ENCODE measurements at regions of chr16 and their contacts with region 1.

Region 1: DNA sequence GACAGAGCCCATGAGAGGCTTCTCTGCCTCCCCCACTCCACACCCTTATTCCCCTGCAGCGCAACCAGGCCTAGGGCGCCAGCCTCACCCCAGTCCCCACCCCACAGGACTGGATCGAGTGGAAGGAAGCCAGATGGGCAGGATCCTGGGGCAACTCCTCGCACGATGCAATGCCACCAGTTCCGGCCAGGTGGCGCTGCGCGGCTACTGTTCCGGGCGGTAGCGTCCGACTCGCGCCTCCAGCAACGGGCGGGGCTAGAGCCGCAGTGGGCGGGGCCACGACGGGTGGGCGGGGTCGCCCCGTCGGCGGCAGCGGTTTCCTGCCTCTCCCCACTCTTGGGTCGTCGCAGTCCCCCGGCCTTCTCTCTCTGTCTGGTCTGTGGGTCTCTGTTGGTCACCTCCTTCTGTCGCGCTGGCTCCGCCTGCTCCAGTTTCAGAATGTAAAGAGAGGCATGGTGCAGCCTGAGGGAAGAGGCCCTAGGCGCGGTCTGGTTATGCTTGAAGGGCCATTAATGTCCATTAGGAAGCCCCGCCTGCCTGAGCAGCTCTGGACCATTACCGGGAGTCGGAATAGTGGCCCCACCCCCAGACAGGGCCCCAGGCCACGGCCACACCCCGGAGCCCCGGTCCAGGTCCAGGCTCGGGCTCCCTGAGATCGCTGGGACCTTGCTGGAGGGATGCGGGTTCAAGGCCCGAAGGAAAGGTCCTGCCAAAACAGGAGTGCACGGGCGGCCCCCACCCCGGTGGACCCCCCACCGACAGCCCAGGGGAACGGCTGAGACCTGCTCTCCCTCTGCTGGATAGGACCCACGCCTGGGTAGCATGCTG is 3.4 kb upstream of the NHERF2 start:
- DNase-seq: peak; percentile 77
- ATAC-seq: peak; percentile 64
- H3K4me3 ChIP-seq: peak overlapping the region; percentile 36 to 50
- H3K27ac ChIP-seq: peak overlapping the region; percentile 88
- H3K4me1 ChIP-seq: peaks cover 42 to 67% of the 10 kb centered on the region in 2 experiments
- H3K27me3 ChIP-seq: no peaks in the 10 kb centered on the region
- CTCF ChIP-seq: peak in 2 of 3 experiments; percentile 91 to 92; a peak in 4 of 6 replicates
- POLR2A ChIP-seq: peak; percentile 35
- RAD21 ChIP-seq: no peak

Region 2: DNA sequence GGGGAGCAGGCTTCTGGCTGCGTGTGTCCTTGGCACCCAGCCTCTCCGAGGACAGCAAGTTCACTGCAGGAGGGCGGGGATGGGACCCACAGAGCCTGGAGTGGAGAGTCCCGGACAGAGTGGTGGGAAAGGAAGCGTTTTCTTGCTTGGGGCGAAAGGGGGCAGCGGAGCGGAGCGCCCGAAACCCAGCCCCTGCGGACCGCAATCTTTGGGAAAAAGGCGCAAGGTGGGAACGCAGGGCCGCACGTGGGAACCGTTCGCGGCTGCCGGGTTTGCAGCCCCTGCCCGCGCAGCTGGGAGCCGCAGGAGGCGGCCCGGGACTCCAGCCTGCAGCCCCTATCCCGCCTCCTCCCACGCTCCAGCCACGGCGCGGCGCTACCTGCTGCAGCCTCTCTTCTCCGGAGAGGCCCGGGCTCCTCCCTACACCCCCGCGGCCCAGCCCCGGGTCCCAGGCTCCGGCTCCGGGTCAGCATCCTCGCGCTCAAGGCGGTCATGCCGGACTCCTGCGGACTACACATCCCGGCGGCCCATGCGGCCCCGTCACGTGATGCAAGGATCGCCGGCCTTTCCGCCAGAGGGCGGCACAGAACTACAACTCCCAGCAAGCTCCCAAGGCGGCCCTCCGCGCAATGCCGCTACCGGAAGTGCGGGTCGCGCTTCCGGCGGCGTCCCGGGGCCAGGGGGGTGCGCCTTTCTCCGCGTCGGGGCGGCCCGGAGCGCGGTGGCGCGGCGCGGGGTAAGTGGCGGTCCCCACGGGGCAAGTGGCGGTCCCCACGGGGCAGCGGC is 24.2 kb after region 1 on chr16 and contains the starts of genes NTHL1 and TSC2:
- CTCF ChIA-PET with region 1: interaction called, 12 read pairs
- POLR2A ChIA-PET with region 1: no interaction called
- RAD21 ChIA-PET with region 1: no interaction called
- intact Hi-C with region 1: no loop called
- DNase-seq: peak; percentile 91
- ATAC-seq: peak; percentile 96
- H3K4me3 ChIP-seq: peak within 1 kb of the TSS; percentile 64 to 88
- H3K27ac ChIP-seq: peak within 1 kb of the TSS; percentile 71
- H3K4me1 ChIP-seq: peaks cover 6 to 34% of the 10 kb centered on the region in 2 experiments; a peak in 3 of 4 replicates
- H3K27me3 ChIP-seq: no peaks in the 10 kb centered on the region
- CTCF ChIP-seq: peak in 2 of 3 experiments; percentile 7 to 21; a peak in 1 of 6 replicates
- POLR2A ChIP-seq: peak; percentile 67
- RAD21 ChIP-seq: no peak
- total RNA-seq, gene NTHL1: 40.1 TPM
- total RNA-seq, gene TSC2: 74.1 TPM

Region 3: DNA sequence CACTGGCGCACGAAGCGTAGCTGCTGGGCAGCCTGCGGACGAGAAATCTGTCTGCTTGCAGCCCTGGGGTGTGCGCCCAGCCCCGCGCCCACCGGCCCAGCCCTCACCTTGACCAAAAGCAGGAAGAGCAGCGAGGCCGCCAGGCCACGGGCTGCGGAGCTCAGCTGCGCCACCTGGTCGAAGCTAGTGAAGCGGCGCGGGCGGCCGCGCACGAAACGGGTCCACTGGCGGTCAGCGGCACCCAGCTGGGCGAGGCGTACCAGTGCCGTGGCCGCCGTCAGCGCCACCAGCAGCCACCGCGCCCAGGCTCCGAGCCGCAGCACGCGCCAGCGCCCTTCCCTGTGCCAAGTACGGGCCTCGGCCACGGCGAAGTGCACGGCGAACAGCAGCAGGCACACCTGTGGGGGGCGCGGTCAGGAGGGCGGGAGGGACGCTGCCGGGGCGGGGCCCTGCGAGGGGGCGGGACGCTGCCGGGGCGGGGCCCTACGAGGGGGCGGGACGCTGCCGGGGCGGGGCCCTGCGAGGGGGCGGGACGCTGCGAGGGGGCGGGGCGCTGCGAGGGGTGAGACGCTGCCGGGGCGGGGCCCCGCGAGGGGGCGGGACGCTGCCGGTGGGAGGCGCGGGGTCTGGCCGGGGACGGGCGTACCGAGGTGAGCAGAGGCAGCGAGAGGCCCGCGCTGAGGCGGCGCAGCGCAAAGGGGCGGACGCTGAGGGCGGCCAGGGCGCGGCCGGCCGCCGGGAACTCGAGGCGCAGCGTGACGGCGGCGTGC is 67.7 kb after region 1 on chr16:
- CTCF ChIA-PET with region 1: interaction called, 13 read pairs
- POLR2A ChIA-PET with region 1: interaction called, 3 read pairs
- RAD21 ChIA-PET with region 1: no interaction called
- intact Hi-C with region 1: loop called (anchors 2 kb)
- DNase-seq: peak; percentile 66
- ATAC-seq: peak; percentile 82
- H3K4me3 ChIP-seq: peak overlapping the region; percentile 49 to 62
- H3K27ac ChIP-seq: peak overlapping the region; percentile 84
- H3K4me1 ChIP-seq: peaks cover 9 to 29% of the 10 kb centered on the region in 2 experiments
- H3K27me3 ChIP-seq: no peaks in the 10 kb centered on the region
- CTCF ChIP-seq: peak; percentile 54 to 63 (median 55)
- POLR2A ChIP-seq: no peak
- RAD21 ChIP-seq: peak; percentile 62

Region 4: DNA sequence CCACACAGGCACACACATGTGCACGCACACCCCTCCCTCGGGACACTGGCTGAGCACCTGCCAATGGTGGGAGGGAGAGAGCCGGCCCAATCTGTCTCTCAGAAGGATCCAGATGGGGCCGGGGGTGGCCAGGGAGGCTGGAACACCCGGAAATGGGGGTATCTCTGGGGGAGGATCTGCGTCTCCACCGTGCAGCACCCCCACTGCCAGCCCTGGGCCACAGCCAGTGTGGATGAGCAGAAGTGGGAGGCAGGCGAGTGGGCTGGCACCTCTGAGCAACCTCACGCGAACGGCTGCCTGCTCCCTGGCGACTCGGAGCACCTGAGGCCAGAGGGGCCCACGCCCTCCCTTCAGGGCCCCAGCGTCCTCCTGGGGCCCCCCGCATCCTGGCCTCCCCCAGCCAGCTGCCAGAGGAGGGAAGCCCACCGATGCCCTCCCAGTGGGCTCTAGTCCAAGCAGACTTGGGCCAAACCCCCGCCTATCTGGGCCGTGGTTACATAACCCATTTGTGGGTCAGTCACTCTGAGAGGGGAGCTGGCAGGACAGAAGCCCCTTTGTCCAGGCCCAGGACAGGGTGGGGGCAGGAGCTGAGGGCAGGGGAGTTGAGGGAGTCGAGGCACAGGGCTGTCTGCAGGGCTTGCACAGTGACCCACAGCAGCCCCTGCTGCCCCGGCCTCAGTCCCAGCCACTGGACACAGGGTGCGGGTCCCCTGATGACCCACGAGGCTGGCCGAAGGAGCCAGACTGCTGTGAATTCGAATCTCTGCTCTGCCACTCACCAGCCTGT is 167.5 kb after region 1 on chr16:
- CTCF ChIA-PET with region 1: no interaction called
- POLR2A ChIA-PET with region 1: no interaction called
- RAD21 ChIA-PET with region 1: no interaction called
- intact Hi-C with region 1: no loop called
- DNase-seq: no peak
- ATAC-seq: no peak
- H3K4me3 ChIP-seq: no peak overlapping the region
- H3K27ac ChIP-seq: no peak overlapping the region
- H3K4me1 ChIP-seq: peaks cover 5 to 18% of the 10 kb centered on the region in 2 experiments
- H3K27me3 ChIP-seq: no peaks in the 10 kb centered on the region
- CTCF ChIP-seq: no peak
- POLR2A ChIP-seq: no peak
- RAD21 ChIP-seq: no peak